Panc1 (cell line): ENCODE measurements at regions of chr15 and their contacts with region 1.

Region 1: GRCh38 chr15:69858456-69858855 is 239.3 kb downstream of the TLE3 start:
- DNase-seq: no peak
- ATAC-seq: no peak; the same call in 1 of the 2 replicates
- H3K4me3 ChIP-seq: no peak overlapping the region
- H3K27ac ChIP-seq: no peak overlapping the region
- H3K4me1 ChIP-seq: peaks cover 5% of the 10 kb centered on the region
- H3K27me3 ChIP-seq: no peaks in the 10 kb centered on the region
- CTCF ChIP-seq: no peak

Region 2: GRCh38 chr15:70280781-70281180 is 422.3 kb after region 1 on chr15:
- CTCF ChIA-PET with region 1: no interaction called
- POLR2A ChIA-PET with region 1: interaction called, 18 read pairs
- in situ Hi-C with region 1: no loop called
- intact Hi-C with region 1: no loop called
- DNase-seq: no peak
- ATAC-seq: no peak
- H3K4me3 ChIP-seq: no peak overlapping the region
- H3K27ac ChIP-seq: no peak overlapping the region
- H3K4me1 ChIP-seq: no peaks in the 10 kb centered on the region; the same call in 1 of the 2 replicates
- H3K27me3 ChIP-seq: no peaks in the 10 kb centered on the region
- CTCF ChIP-seq: no peak